BJ (cell line): ENCODE measurements at regions of chr11 and their contacts with region 1.

Region 1: GRCh38 chr11:32713496-32713895 is 81.0 kb downstream of the CCDC73 start:
- DNase-seq: no peak
- H3K4me3 ChIP-seq: no peak overlapping the region
- H3K27me3 ChIP-seq: peaks cover 6% of the 10 kb centered on the region
- CTCF ChIP-seq: 0 out of 2 replicates have a peak, but pooled peaks have one; percentile 18

Region 2: DNA sequence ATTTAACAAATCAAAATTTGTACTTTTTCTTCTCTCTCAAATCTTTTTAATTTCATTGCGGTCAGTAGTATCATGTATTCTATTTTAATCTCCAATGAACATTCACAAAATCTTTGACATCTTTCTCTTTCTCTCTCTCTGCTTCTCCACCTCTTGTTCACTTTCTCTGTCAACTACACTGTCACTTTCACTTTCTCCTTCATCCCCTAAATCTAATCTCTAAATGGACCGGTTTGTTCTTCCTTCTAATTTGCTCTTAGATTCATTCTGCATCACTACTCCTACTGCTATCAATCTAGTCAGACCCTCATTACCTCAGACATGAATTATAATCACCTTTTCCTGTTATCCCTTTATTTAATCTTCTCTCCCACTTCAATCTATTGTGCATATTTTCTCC is 62.4 kb after region 1 on chr11:
- CTCF ChIA-PET with region 1: no interaction called
- POLR2A ChIA-PET with region 1: interaction called, 10 read pairs
- DNase-seq: no peak
- H3K4me3 ChIP-seq: no peak overlapping the region
- H3K27me3 ChIP-seq: no peaks in the 10 kb centered on the region
- CTCF ChIP-seq: no peak

Region 3: GRCh38 chr11:32911413-32911812 is 197.9 kb after region 1 on chr11:
- CTCF ChIA-PET with region 1: no interaction called
- POLR2A ChIA-PET with region 1: no interaction called
- DNase-seq: no peak
- H3K4me3 ChIP-seq: no peak overlapping the region
- H3K27me3 ChIP-seq: no peaks in the 10 kb centered on the region
- CTCF ChIP-seq: no peak